ENCODE measurements at regions of chr3 and their contacts with region 1.

Region 1: DNA sequence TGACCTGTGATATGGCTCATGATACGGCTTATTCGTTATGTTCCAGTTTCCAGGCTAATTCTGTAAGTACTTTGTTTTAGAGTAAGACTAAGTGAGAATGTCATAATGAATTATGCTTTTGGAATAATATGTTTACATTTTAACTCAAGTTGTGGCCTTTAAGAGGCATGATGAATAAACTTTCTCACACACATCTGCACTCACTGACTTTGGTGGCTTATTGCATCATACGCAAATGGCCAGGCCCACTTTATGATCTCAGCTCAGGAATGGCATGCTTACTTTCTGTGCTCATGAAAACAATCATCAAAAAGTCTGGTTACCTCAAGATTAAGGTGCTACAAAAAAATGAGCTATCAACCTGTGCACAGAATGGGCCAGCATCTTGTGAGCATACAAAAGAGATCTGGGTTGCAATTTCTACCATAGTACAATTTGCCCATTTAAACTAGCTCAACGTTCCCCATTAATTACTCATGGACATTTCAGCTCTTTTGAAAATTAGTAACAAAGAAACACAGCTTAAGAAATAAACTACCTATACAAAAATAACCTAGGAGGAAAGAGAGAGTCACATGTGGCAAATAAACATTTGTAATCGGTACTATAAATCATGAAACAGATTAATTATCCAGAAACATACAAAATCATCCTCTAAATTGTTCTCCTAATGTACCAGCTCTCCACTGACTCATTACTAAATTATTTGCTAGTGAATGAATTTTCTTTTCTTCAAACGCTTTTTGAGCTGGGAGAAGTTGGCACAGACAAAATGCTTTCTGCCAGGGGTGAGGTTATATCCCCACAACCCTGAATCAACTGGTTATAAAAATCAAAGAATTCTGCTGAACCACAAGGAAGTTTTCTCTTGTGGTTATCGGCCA is 439.0 kb upstream of the ADAMTS9 start:
- DNase-seq: peak; percentile 84
- H3K4me3 ChIP-seq: peak overlapping the region in 1 of 3 experiments; percentile 19
- H3K27ac ChIP-seq: peak overlapping the region; percentile 83
- H3K4me1 ChIP-seq: peaks cover 31% of the 10 kb centered on the region
- H3K27me3 ChIP-seq: no peaks in the 10 kb centered on the region
- CTCF ChIP-seq: no peak

Region 2: DNA sequence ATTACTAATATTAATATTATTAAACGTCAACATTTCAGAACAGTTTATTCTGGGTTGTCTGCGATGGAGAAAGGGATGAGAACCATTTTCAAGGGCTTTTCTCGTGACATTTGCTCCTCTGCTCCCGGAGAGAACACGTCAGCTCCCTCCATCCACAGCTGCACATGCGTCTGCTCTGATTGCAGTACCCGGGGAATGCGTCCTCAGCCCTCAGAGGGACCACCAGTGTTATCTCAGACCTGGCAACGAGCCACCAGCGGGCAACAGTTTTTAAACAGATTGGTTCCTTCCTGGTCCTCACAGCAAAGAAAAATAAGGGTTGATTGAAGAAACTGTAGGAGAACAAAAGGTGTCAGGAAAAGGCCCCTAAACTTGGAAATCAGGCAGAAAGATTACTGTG is 236.8 kb before region 1 on chr3:
- CTCF ChIA-PET with region 1: no interaction called
- dilution Hi-C with region 1: no loop called
- in situ Hi-C with region 1: no loop called
- intact Hi-C with region 1: loop called (anchors 5 kb)
- DNase-seq: no peak
- H3K4me3 ChIP-seq: no peak overlapping the region
- H3K27ac ChIP-seq: no peak overlapping the region
- H3K4me1 ChIP-seq: no peaks in the 10 kb centered on the region
- H3K27me3 ChIP-seq: no peaks in the 10 kb centered on the region
- CTCF ChIP-seq: no peak

Region 3: GRCh38 chr3:64977291-64978100 is 149.3 kb before region 1 on chr3:
- CTCF ChIA-PET with region 1: no interaction called
- dilution Hi-C with region 1: loop called (anchors 5 kb)
- in situ Hi-C with region 1: no loop called
- intact Hi-C with region 1: loop called (anchors 5 kb)
- DNase-seq: peak; percentile 99
- H3K4me3 ChIP-seq: peak overlapping the region in 1 of 3 experiments; percentile 1
- H3K27ac ChIP-seq: peak overlapping the region; percentile 96
- H3K4me1 ChIP-seq: peaks cover 46% of the 10 kb centered on the region
- H3K27me3 ChIP-seq: no peaks in the 10 kb centered on the region
- CTCF ChIP-seq: no peak

Region 4: GRCh38 chr3:65713016-65713415 is 586.2 kb after region 1 on chr3:
- CTCF ChIA-PET with region 1: no interaction called
- dilution Hi-C with region 1: no loop called
- in situ Hi-C with region 1: no loop called
- intact Hi-C with region 1: no loop called
- DNase-seq: peak; percentile 20
- H3K4me3 ChIP-seq: no peak overlapping the region
- H3K27ac ChIP-seq: no peak overlapping the region
- H3K4me1 ChIP-seq: no peaks in the 10 kb centered on the region
- H3K27me3 ChIP-seq: no peaks in the 10 kb centered on the region
- CTCF ChIP-seq: no peak

Measured in mammary epithelial cell (primary cell).